ENCODE measurements at regions of chr19 and their contacts with region 1.

Region 1: DNA sequence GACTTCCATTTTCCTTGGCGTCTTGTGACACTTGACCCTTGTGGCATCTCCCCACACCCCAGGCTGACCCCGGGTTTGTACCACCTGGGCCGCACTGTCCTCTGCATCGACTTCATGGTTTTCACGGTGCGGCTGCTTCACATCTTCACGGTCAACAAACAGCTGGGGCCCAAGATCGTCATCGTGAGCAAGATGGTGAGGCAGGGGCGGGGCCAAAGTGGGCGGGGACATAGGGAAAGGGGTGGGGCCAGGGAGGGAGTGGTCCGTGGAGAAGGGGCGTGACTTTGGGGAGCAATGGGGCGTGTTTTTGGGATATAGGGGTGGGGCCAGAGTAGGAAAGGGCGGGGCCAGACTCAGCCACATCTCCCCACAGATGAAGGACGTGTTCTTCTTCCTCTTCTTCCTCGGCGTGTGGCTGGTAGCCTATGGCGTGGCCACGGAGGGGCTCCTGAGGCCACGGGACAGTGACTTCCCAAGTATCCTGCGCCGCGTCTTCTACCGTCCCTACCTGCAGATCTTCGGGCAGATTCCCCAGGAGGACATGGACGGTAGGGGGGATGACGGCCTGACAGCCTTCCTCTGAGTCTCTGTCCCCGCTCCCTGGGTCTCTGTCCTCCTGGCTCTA is 42.8 kb downstream of the TRPM4 start:
- DNase-seq: peak; percentile 76
- H3K4me3 ChIP-seq: peak overlapping the region; percentile 71
- H3K27ac ChIP-seq: peak overlapping the region; percentile 35
- H3K4me1 ChIP-seq: peaks cover 26% of the 10 kb centered on the region
- CTCF ChIP-seq: no peak

Region 2: DNA sequence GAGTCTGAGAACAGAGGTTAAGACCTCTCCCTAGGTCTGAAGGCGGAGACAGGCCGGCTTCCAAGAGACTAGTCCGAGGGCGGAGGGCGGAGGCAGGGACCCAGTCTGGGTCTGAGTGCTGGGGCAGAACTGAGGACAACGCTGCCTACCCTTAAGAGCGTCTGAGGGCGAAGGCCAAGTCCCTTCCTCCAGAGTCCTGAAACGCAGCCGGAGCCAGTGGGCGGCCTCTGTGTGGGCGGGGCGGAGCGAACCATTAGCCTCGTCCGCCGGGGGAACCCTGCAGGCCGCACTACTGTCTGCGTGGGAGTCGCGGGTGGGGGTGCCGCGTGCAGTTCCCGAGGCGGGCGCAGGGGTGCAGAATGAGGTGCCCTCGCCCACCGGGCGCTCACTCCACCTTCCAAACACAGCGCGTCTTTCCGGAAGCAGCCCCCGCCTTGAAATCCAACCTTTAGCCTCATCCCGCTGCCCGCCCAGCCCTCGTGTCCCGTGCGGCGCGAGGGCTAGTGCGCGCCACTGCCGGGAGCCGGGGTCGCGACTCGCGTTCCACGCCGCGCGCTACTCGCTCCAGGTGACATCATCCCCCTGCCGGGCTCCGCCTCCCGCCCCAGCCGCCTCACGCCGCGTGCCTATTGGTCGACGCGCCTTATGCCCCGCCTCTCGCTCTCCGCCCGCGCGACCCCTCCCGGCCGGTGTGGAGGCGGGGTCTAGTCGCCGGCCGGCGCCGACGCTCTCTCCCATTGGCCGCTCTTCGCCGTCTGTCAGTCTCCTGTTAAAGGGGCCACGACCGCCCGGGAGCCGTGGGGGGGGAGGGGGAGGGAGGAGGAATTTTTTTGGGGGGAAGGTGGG is 81.6 kb before region 1 on chr19 and contains the start of gene C19orf73:
- CTCF ChIA-PET with region 1: interaction called, 5 read pairs
- POLR2A ChIA-PET with region 1: interaction called, 3 read pairs
- intact Hi-C with region 1: loop called (anchors 5 kb)
- DNase-seq: peak; percentile 95
- H3K4me3 ChIP-seq: peak within 1 kb of the TSS; percentile 79
- H3K27ac ChIP-seq: peak within 1 kb of the TSS; percentile 63
- H3K4me1 ChIP-seq: peaks cover 26% of the 10 kb centered on the region
- CTCF ChIP-seq: 0 out of 2 replicates have a peak, but pooled peaks have one; percentile 7
- total RNA-seq, gene C19orf73: 5.9 and 8.3 TPM in 2 replicates

Region 3: GRCh38 chr19:49160450-49161189 is 39.7 kb before region 1 on chr19:
- CTCF ChIA-PET with region 1: interaction called, 27 read pairs
- POLR2A ChIA-PET with region 1: no interaction called
- intact Hi-C with region 1: no loop called
- DNase-seq: no peak
- H3K4me3 ChIP-seq: no peak overlapping the region
- H3K27ac ChIP-seq: no peak overlapping the region
- H3K4me1 ChIP-seq: no peaks in the 10 kb centered on the region
- CTCF ChIP-seq: no peak

Measured in OCI-LY7 (cell line).